K562 (cell line): ENCODE measurements at regions of chr22 and their contacts with region 1.

Region 1: DNA sequence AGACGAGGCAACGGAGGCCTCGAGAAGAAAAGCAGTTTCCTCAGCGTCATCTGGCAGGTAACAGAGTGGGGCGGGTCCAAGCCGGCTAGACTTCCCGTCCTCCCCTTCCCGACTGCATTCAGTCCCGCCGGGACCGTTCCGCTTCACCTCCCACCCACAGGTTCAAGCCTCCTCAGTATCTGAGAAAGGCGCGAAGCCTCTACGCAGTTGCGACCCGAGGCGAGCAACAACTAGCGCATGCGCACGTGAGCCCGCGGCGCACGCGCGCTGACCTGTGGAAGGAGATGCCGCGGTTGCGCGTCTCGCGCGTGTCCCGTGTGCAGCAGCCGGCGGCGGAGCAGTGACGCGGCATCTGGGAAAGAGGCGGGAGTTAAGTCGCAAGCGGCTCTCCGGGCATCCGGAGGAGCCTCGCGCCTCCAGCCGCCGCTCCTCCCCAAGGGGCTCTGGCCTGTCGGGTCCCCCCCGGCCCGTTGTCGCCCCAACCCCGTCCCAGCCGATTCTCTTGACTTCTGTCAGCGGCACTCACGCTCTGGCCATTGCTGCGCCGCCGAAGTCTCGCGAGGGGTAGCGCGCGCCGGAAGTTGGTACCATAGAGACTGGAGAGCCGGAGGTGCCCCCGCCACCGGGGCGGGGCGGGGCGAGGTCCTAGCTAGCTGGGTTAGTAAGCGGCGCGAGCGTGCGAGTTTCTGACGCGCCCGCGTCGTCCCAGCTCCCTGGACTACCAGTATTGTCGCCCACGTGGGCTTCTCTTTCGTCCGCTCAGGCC is at the start of gene THAP7:
- DNase-seq: peak; percentile 100
- ATAC-seq: peak; percentile 91
- H3K4me3 ChIP-seq: peak within 1 kb of the TSS; percentile 58
- H3K27ac ChIP-seq: peak within 1 kb of the TSS; percentile 87
- H3K4me1 ChIP-seq: peaks cover 25 to 76% of the 10 kb centered on the region in 2 experiments
- H3K27me3 ChIP-seq: no peaks in the 10 kb centered on the region
- CTCF ChIP-seq: peak in 2 of 3 experiments; percentile 8 to 17; a peak in 2 of 6 replicates
- EP300 ChIP-seq: peak; percentile 60
- POLR2A ChIP-seq: no peak
- RAD21 ChIP-seq: peak; percentile 39 to 44; a peak in 2 of 4 replicates
- polyA plus RNA-seq, gene THAP7: 7.9 to 33.1 TPM

Region 2: GRCh38 chr22:20507253-20508066 is 494.3 kb before region 1 on chr22 and contains the start of gene MED15:
- CTCF ChIA-PET with region 1: no interaction called
- POLR2A ChIA-PET with region 1: no interaction called
- in situ Hi-C with region 1: no loop called
- intact Hi-C with region 1: loop called (anchors 5 kb)
- DNase-seq: peak; percentile 99 to 100 (median 100)
- ATAC-seq: peak; percentile 93
- H3K4me3 ChIP-seq: peak within 1 kb of the TSS; percentile 53
- H3K27ac ChIP-seq: peak within 1 kb of the TSS; percentile 82
- H3K4me1 ChIP-seq: peaks cover 45 to 47% of the 10 kb centered on the region in 2 experiments
- H3K27me3 ChIP-seq: no peaks in the 10 kb centered on the region
- CTCF ChIP-seq: peak in 2 of 3 experiments; percentile 6 to 23; a peak in 3 of 6 replicates
- EP300 ChIP-seq: peak; percentile 82
- POLR2A ChIP-seq: no peak
- RAD21 ChIP-seq: peak in 1 of 2 experiments; percentile 40; a peak in 2 of 4 replicates
- polyA plus RNA-seq, gene MED15: 4.0 to 5.2 TPM

Region 3: GRCh38 chr22:20847318-20847822 is 154.4 kb before region 1 on chr22:
- CTCF ChIA-PET with region 1: no interaction called
- POLR2A ChIA-PET with region 1: no interaction called
- in situ Hi-C with region 1: no loop called
- intact Hi-C with region 1: no loop called
- DNase-seq: no peak
- ATAC-seq: peak; percentile 37
- H3K4me3 ChIP-seq: no peak overlapping the region
- H3K27ac ChIP-seq: no peak overlapping the region
- H3K4me1 ChIP-seq: peaks cover 18 to 22% of the 10 kb centered on the region in 2 experiments
- H3K27me3 ChIP-seq: no peaks in the 10 kb centered on the region; a peak in 1 of 5 replicates
- CTCF ChIP-seq: no peak
- EP300 ChIP-seq: no peak
- POLR2A ChIP-seq: no peak
- RAD21 ChIP-seq: no peak

Region 4: DNA sequence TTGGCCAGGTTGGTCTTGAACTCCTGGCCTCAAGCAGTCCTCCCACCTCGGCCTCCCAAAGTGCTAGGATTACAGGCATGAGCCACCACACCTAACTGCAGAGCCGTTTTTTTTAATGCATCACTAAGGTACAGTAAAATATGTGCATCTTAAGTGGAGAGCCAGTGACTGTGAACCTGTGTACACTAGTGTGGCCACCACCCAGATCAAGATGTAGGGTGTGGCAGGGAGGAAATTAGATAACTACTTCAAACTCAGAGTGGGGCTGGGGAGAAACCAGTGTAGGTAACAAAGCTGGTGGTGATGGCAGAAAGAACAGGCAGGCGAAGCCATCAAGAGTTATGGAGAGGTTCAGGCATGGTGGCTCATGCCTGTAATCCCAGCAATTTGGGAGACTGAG is 128.5 kb before region 1 on chr22:
- CTCF ChIA-PET with region 1: no interaction called
- POLR2A ChIA-PET with region 1: no interaction called
- in situ Hi-C with region 1: no loop called
- intact Hi-C with region 1: no loop called
- DNase-seq: peak in 2 of 4 experiments; percentile 35 to 45
- ATAC-seq: peak; percentile 50
- H3K4me3 ChIP-seq: no peak overlapping the region
- H3K27ac ChIP-seq: no peak overlapping the region
- H3K4me1 ChIP-seq: peaks cover 10 to 20% of the 10 kb centered on the region in 2 experiments
- H3K27me3 ChIP-seq: no peaks in the 10 kb centered on the region
- CTCF ChIP-seq: no peak
- EP300 ChIP-seq: no peak
- POLR2A ChIP-seq: no peak
- RAD21 ChIP-seq: no peak

Region 5: DNA sequence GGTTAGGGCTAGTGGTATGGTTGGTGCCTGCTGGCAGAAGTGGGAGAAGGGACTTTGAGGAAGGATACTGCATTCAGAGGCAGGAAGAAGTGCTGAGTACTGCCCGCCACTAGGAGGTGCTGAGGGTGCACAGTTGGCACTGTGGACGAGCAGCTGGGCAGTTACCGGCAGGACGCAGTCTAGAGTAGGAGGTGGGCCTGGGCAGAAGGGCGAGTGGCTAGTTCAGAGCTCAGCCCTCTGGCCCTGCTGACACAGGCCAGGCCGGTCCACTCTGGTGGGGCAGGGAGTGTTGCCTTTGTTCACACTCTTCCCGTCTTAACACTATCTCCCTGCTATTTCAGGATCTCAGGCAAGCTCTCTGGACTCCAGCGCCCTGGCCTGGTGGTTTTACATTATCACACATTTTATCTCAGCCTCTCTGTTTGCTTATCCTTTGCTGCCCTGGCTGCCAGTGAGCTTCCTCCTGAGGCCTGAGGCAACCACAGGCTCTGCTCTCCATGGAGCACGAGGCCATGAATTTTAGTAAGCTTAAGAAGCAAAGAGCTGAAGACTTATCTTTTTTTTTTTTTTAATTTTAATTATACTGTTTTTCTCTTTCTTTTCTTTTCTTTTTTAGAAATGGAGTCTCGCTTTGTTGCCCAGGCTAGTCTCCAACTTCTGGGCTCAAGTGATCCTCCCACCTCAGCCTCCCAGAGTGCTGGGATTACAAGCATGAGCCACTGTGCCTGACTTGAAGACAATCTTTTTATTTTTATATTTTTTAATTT is 116.0 kb before region 1 on chr22:
- CTCF ChIA-PET with region 1: no interaction called
- POLR2A ChIA-PET with region 1: interaction called, 10 read pairs
- in situ Hi-C with region 1: no loop called
- intact Hi-C with region 1: loop called (anchors 1 kb)
- DNase-seq: peak; percentile 97 to 98 (median 98)
- ATAC-seq: peak; percentile 99
- H3K4me3 ChIP-seq: no peak overlapping the region
- H3K27ac ChIP-seq: peak overlapping the region; percentile 38
- H3K4me1 ChIP-seq: peaks cover 12 to 14% of the 10 kb centered on the region in 2 experiments
- H3K27me3 ChIP-seq: no peaks in the 10 kb centered on the region
- CTCF ChIP-seq: peak; percentile 99 to 100 (median 99)
- EP300 ChIP-seq: peak; percentile 10; the same call in 1 of the 2 replicates
- POLR2A ChIP-seq: no peak; the same call in 1 of the 2 replicates
- RAD21 ChIP-seq: peak; percentile 100

Region 6: DNA sequence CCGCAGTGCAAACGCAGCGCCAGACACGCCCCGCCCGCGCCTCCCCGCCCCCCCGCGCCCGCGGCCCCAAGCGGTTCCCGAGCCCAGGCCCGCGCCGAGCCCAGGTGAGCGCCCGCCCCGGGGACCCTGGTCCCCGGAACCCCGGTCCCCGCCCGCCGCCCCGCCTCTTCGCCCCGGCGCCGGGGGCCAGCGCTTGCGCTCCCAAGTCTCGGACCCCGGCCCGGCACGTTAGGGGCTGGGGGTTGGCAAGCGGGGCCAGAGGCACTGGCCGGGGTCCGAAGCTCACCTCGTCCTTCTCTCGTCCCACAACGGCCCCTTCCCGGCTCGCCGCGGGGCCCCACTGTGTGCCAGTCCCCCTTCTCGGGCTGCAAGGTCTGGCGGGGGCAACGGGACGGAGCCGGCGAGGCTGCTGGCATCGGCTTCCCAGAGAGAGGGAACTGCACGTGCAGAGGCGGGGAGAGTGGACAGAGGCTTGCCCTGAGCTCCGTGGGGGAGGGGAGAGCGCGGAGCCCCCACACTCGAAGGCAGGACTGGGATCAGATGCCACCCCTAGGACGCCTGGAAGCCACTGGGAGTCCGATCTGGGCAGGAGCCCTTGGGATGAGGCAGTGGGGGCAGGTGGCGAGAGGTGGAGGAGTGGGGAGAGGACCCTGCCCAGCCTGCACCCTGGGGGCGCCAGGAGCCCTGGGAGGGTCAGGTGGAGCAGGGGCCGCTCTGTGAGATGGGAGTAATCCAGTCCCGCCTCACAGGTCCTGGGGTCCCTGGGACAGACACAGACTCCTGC is 36.4 kb before region 1 on chr22:
- CTCF ChIA-PET with region 1: no interaction called
- POLR2A ChIA-PET with region 1: interaction called, 451 read pairs
- in situ Hi-C with region 1: no loop called
- intact Hi-C with region 1: loop called (anchors 1 kb)
- DNase-seq: peak in 3 of 4 experiments; percentile 65 to 97 (median 97)
- ATAC-seq: no peak
- H3K4me3 ChIP-seq: no peak overlapping the region
- H3K27ac ChIP-seq: no peak overlapping the region
- H3K4me1 ChIP-seq: peaks cover 0 to 40% of the 10 kb centered on the region in 2 experiments; a peak in 3 of 5 replicates
- H3K27me3 ChIP-seq: peaks cover 11 to 38% of the 10 kb centered on the region in 2 experiments; a peak in 4 of 5 replicates
- CTCF ChIP-seq: no peak
- EP300 ChIP-seq: no peak
- POLR2A ChIP-seq: no peak
- RAD21 ChIP-seq: no peak

Region 7: DNA sequence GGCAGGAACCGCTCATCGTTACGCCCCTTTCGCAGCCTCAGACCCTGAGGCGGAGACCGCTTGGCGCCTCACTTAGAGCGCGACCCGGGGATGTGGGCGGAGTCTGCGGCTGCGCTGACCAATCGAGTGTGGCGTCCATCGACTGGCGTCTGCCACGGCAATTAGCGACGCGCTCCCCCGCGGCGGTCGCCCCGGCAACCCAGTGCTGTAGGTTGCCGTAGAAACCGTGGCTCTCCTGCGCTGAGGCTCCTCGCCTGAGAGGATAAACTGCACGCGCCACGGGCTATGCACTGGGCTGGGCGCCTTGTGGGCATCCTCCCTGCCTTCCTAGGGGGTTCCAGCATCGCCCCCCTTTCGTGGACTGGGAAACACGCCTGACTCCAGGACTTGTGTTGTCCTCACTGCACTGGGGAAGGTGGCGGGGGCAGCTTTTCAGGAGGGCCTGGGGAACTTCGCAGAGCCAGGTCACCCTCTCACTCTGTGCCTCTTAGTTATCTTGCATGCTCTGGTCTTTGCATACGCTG is 12.5 kb after region 1 on chr22:
- CTCF ChIA-PET with region 1: interaction called, 3 read pairs
- POLR2A ChIA-PET with region 1: interaction called, 333 read pairs
- in situ Hi-C with region 1: no loop called
- intact Hi-C with region 1: loop called (anchors 1 kb)
- DNase-seq: peak; percentile 100
- ATAC-seq: peak; percentile 91
- H3K4me3 ChIP-seq: peak overlapping the region; percentile 44
- H3K27ac ChIP-seq: peak overlapping the region; percentile 67
- H3K4me1 ChIP-seq: peaks cover 26 to 46% of the 10 kb centered on the region in 2 experiments
- H3K27me3 ChIP-seq: no peaks in the 10 kb centered on the region; a peak in 1 of 5 replicates
- CTCF ChIP-seq: no peak; a peak in 1 of 6 replicates
- EP300 ChIP-seq: peak; percentile 75
- POLR2A ChIP-seq: no peak
- RAD21 ChIP-seq: no peak

Region 8: GRCh38 chr22:21031971-21032867 is 30.5 kb after region 1 on chr22 and contains the start of gene SLC7A4:
- CTCF ChIA-PET with region 1: no interaction called
- POLR2A ChIA-PET with region 1: interaction called, 44 read pairs
- in situ Hi-C with region 1: no loop called
- intact Hi-C with region 1: no loop called
- DNase-seq: peak in 2 of 4 experiments; percentile 85 to 88
- ATAC-seq: peak; percentile 26
- H3K4me3 ChIP-seq: no peak within 1 kb of the TSS
- H3K27ac ChIP-seq: no peak within 1 kb of the TSS
- H3K4me1 ChIP-seq: peaks cover under 1 to 44% of the 10 kb centered on the region in 2 experiments; a peak in 4 of 5 replicates
- H3K27me3 ChIP-seq: peaks cover 37 to 62% of the 10 kb centered on the region in 2 experiments; a peak in 4 of 5 replicates
- CTCF ChIP-seq: no peak
- EP300 ChIP-seq: no peak
- POLR2A ChIP-seq: no peak
- RAD21 ChIP-seq: no peak
- polyA plus RNA-seq, gene SLC7A4: not detected

Region 9: DNA sequence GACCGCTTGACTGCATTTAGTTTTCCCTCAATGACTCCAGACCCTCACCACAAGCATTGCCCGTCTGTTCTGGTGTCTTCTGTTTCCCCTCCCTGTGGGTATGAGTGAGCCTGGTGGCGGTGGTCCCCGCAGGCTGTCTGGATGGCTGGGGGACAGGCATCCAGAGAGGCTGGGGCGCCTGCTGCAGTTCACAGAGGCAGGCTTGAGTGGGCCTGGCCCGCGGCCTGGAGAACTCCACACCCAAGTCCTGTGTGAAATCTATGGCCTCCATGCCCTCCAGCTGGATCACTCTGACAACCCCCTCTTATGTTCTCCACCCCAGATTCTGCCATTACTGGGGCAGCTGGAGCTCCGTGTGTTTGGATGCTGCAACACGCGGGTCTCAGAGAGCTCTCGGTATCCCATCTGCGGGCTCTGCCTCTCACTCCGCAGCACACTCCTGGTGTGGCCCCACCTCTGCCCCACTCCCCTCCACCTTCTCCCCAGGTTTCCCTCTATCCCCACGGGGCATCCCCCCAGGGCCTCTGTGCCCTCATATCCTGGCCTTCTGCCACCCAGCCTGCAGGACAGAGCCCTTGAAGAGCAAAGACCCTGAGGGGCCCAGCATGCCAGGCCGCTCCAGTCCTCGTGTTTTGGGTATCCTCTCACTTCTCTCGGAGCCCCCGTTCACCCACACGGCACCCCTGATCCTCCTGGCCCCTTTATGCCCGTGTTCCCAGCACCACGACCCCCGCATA is 75.3 kb after region 1 on chr22:
- CTCF ChIA-PET with region 1: no interaction called
- POLR2A ChIA-PET with region 1: no interaction called
- in situ Hi-C with region 1: no loop called
- intact Hi-C with region 1: no loop called
- DNase-seq: peak in 1 of 4 experiments; percentile 47
- ATAC-seq: peak; percentile 26
- H3K4me3 ChIP-seq: no peak overlapping the region
- H3K27ac ChIP-seq: no peak overlapping the region
- H3K4me1 ChIP-seq: peaks cover 0 to 25% of the 10 kb centered on the region in 2 experiments; a peak in 2 of 5 replicates
- H3K27me3 ChIP-seq: peaks cover 62 to 78% of the 10 kb centered on the region in 2 experiments
- CTCF ChIP-seq: no peak
- EP300 ChIP-seq: no peak
- POLR2A ChIP-seq: no peak
- RAD21 ChIP-seq: no peak